ENCODE measurements at regions of chr14 and their contacts with region 1.

Region 1: DNA sequence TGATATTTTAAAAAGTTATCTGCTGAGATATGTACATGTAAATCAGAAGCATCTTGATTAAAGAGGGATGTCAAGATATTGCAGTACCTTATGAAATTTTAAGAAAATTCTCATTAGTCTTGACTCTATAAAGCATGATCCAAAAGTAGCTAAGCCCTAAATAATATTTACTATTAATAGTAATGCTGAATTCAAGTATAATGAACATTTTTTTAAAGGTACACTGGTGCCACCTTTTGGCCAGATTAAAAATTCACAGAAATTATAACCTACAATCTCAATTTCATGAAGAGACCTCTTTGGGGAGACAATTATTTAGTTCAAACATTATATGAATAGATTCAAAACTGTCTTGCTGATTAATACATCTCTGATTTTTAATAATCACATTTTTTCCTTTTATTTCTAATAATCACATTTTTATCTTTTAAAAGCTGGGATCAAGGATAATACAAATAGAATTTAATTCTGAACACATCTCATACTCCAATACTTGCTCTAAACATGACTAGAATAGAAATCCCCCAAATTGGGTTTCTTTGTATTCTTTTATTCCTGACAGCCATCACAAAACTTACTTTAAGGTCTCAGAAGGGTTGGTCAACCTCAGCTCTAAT is 13.4 kb downstream of the AKAP5 start:
- DNase-seq: no peak
- ATAC-seq: peak; percentile 39; the same call in 1 of the 3 replicates
- H3K4me3 ChIP-seq: no peak overlapping the region
- H3K27ac ChIP-seq: no peak overlapping the region
- H3K4me1 ChIP-seq: peaks cover 7% of the 10 kb centered on the region
- H3K27me3 ChIP-seq: no peaks in the 10 kb centered on the region
- CTCF ChIP-seq: peak in 2 of 3 experiments; percentile 33 to 54; a peak in 3 of 6 replicates
- EP300 ChIP-seq: no peak
- POLR2A ChIP-seq: no peak
- RAD21 ChIP-seq: peak; percentile 57

Region 2: GRCh38 chr14:64349741-64350490 is 128.8 kb before region 1 on chr14:
- CTCF ChIA-PET with region 1: interaction called, 165 read pairs
- POLR2A ChIA-PET with region 1: interaction called, 3 read pairs
- RAD21 ChIA-PET with region 1: interaction called, 51 read pairs
- SMC1A ChIA-PET with region 1: interaction called, 20 read pairs
- in situ Hi-C with region 1: no loop called
- intact Hi-C with region 1: no loop called
- DNase-seq: no peak
- ATAC-seq: no peak
- H3K4me3 ChIP-seq: no peak overlapping the region
- H3K27ac ChIP-seq: no peak overlapping the region
- H3K4me1 ChIP-seq: no peaks in the 10 kb centered on the region
- H3K27me3 ChIP-seq: no peaks in the 10 kb centered on the region
- CTCF ChIP-seq: no peak
- EP300 ChIP-seq: no peak
- POLR2A ChIP-seq: no peak
- RAD21 ChIP-seq: no peak

Region 3: GRCh38 chr14:64438181-64438841 is 40.4 kb before region 1 on chr14:
- CTCF ChIA-PET with region 1: interaction called, 244 read pairs
- POLR2A ChIA-PET with region 1: interaction called, 4 read pairs
- RAD21 ChIA-PET with region 1: interaction called, 4 read pairs
- SMC1A ChIA-PET with region 1: interaction called, 26 read pairs
- in situ Hi-C with region 1: no loop called
- intact Hi-C with region 1: no loop called
- DNase-seq: no peak
- ATAC-seq: no peak
- H3K4me3 ChIP-seq: no peak overlapping the region
- H3K27ac ChIP-seq: no peak overlapping the region
- H3K4me1 ChIP-seq: no peaks in the 10 kb centered on the region
- H3K27me3 ChIP-seq: no peaks in the 10 kb centered on the region
- CTCF ChIP-seq: no peak
- EP300 ChIP-seq: no peak
- POLR2A ChIP-seq: no peak
- RAD21 ChIP-seq: no peak

Region 4: DNA sequence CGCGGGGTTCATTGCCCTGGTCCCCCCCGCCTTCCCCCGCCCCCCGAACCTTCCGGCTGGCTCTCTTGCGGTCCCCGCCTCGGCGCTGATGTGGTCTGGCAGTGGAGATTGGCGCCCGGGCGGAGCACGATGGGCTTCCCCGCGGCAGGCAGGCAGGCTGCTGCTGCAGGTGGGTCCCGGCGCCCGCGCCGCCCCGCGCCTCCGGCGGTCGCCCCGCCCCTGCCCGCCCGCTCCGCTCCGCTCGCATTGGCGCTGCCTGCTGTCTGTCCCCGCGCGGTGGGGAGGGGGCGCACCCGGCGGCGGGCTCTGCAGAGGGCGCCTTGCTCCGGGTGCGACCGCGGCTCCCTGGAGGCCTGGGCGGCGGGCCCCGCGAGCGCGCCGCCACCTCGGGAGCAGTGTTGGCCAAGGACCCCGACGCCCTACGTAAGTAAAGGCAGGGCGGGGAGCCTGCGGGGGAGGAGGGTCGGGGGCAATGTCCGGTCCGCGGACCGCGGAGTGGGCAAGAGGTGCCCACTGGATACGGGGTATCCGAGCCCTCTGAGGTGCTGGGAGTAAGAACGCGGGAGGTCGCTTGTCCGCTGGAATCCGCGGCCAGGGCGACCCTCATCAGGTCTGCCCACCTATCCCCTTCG is 13.4 kb before region 1 on chr14 and contains the start of gene AKAP5:
- CTCF ChIA-PET with region 1: interaction called, 19 read pairs
- POLR2A ChIA-PET with region 1: interaction called, 4 read pairs
- RAD21 ChIA-PET with region 1: interaction called, 11 read pairs
- SMC1A ChIA-PET with region 1: interaction called, 14 read pairs
- in situ Hi-C with region 1: no loop called
- intact Hi-C with region 1: no loop called
- DNase-seq: no peak
- ATAC-seq: peak; percentile 89
- H3K4me3 ChIP-seq: peak within 1 kb of the TSS; percentile 79
- H3K27ac ChIP-seq: peak within 1 kb of the TSS; percentile 29; the same call in 1 of the 2 replicates
- H3K4me1 ChIP-seq: peaks cover 33% of the 10 kb centered on the region
- H3K27me3 ChIP-seq: no peaks in the 10 kb centered on the region
- CTCF ChIP-seq: 0 out of 6 replicates have a peak, but pooled peaks of 1 of the 3 experiments have one; percentile 4
- EP300 ChIP-seq: no peak
- POLR2A ChIP-seq: peak; percentile 75
- RAD21 ChIP-seq: no peak
- polyA plus RNA-seq, gene AKAP5: 0.45 to 1.5 TPM

Region 5: DNA sequence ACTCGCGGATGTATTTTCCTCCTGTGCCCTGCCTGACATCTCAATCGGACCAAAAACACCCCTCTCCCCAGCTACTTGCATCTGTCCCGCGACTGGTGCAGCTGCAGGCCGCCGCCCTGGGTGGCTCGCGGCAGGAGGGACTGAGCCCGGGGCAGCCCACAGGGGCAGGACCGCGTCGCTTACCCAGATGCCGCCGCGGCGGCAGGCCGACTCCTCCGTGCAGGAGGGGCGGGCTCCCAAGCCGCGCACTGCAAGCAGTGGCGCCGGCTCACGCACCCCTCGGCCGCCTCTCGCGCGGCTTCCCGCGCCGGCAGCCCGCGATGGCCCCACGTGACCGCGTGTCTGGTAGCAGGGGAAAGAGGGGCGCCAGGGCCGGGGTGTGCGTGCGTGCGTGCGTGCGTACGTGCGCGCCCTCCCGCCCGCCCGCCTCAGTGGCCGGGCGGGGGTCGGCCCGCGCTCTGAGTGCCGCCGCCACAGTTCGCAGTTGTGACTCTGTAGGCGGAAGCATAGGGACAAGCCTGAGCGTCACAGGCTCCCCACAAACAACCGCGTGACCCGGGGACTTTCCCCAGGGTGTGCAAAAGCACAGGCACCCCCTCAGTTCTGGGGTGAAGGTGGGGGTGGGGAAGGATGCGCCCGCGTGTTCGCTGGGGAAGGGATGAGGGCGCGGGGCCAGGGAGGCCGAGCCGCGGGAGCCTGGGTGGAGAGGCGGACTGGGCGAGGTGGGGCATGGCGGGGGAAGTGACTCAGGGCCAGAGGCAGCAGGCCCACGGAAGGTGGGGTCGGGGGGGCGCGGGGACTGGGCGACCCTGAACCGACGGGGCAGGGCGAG is 25.0 kb after region 1 on chr14 and contains the start of gene ZBTB25:
- CTCF ChIA-PET with region 1: interaction called, 36 read pairs
- POLR2A ChIA-PET with region 1: interaction called, 3 read pairs
- RAD21 ChIA-PET with region 1: interaction called, 5 read pairs
- SMC1A ChIA-PET with region 1: interaction called, 51 read pairs
- in situ Hi-C with region 1: no loop called
- intact Hi-C with region 1: loop called (anchors 2 kb)
- DNase-seq: peak; percentile 83
- ATAC-seq: peak; percentile 71
- H3K4me3 ChIP-seq: peak within 1 kb of the TSS; percentile 91
- H3K27ac ChIP-seq: peak within 1 kb of the TSS; percentile 98
- H3K4me1 ChIP-seq: peaks cover 6% of the 10 kb centered on the region
- H3K27me3 ChIP-seq: no peaks in the 10 kb centered on the region
- CTCF ChIP-seq: no peak
- EP300 ChIP-seq: peak; percentile 82 to 86
- POLR2A ChIP-seq: peak; percentile 85
- RAD21 ChIP-seq: no peak
- polyA plus RNA-seq, gene ZBTB25: 4.1 to 5.6 TPM